ENCODE measurements at regions of chr1 and their contacts with region 1.

Region 1: DNA sequence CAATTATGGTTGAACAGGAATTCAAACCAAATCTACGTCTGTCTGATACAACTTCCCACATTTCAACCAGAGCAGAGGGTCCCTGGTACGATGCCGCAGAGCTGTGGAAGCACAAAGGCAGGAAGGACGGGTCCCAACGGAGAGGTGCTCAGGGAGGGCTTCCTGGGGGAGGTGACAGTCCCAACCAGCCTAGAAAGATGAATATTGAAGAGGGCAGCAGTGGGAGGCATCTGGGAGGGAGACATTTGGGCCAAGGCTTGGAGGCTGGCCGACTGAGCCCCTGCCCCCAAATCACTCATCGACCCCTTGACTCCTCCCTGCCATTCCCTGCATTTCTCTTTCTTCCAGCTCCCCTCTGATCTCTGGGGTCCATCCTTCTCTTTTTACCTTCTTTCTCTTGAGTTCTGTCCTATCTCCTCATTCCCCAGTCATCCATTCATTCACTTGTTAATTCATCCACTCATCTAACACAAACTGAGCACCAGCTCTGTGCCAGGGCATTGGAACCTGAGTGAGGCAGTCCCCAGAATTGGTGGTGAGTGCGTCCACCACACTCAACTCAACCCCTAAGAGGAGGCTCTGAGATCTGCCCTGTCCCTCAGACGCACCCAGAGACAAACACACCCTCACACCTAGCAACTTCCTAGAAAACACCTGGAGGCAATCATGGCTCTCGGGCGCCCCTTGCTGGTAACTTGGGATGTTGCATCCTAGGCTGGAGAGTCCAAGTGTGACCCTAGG is 13.2 kb upstream of the CELA3B start:
- DNase-seq: peak; percentile 70 to 86
- ATAC-seq: peak; percentile 79 to 93 (median 91)
- H3K4me3 ChIP-seq: no peak overlapping the region
- H3K4me3 Mint-ChIP-seq: no peak overlapping the region
- H3K27ac ChIP-seq: no peak overlapping the region
- H3K27ac Mint-ChIP-seq: no peak overlapping the region
- H3K4me1 ChIP-seq: no peaks in the 10 kb centered on the region
- H3K4me1 Mint-ChIP-seq: peaks cover 4 to 5% of the 10 kb centered on the region in 2 donors
- H3K27me3 ChIP-seq: no peaks in the 10 kb centered on the region
- H3K27me3 Mint-ChIP-seq: peaks cover 3 to 6% of the 10 kb centered on the region in 2 donors
- CTCF ChIP-seq: peak; percentile 88

Region 2: GRCh38 chr1:21508580-21509350 is 454.9 kb before region 1 on chr1:
- intact Hi-C with region 1: loop called (anchors 5 kb)
- DNase-seq: peak; percentile 52 to 71
- ATAC-seq: peak; percentile 87 to 94 (median 90)
- H3K4me3 ChIP-seq: no peak overlapping the region
- H3K4me3 Mint-ChIP-seq: peak overlapping the region; percentile 26
- H3K27ac ChIP-seq: no peak overlapping the region
- H3K27ac Mint-ChIP-seq: no peak overlapping the region
- H3K4me1 ChIP-seq: peaks cover 8% of the 10 kb centered on the region
- H3K4me1 Mint-ChIP-seq: peaks cover 6 to 7% of the 10 kb centered on the region in 2 donors
- H3K27me3 ChIP-seq: peaks cover 16% of the 10 kb centered on the region
- H3K27me3 Mint-ChIP-seq: peaks cover 45 to 60% of the 10 kb centered on the region in 2 donors
- CTCF ChIP-seq: peak; percentile 20

Region 3: GRCh38 chr1:21703318-21703963 is 260.2 kb before region 1 on chr1:
- intact Hi-C with region 1: loop called (anchors 1 kb)
- DNase-seq: peak in 1 of 2 donors; percentile 37
- ATAC-seq: peak in 1 of 3 donors; percentile 37
- H3K4me3 ChIP-seq: no peak overlapping the region
- H3K4me3 Mint-ChIP-seq: no peak overlapping the region
- H3K27ac ChIP-seq: no peak overlapping the region
- H3K27ac Mint-ChIP-seq: peak overlapping the region in 1 of 2 donors; percentile 21
- H3K4me1 ChIP-seq: no peaks in the 10 kb centered on the region
- H3K4me1 Mint-ChIP-seq: peaks cover 0 to 4% of the 10 kb centered on the region in 2 donors
- H3K27me3 ChIP-seq: no peaks in the 10 kb centered on the region
- H3K27me3 Mint-ChIP-seq: no peaks in the 10 kb centered on the region
- CTCF ChIP-seq: no peak

Region 4: GRCh38 chr1:21725748-21726392 is 237.8 kb before region 1 on chr1:
- intact Hi-C with region 1: no loop called
- DNase-seq: no peak
- ATAC-seq: no peak
- H3K4me3 ChIP-seq: no peak overlapping the region
- H3K4me3 Mint-ChIP-seq: no peak overlapping the region
- H3K27ac ChIP-seq: no peak overlapping the region
- H3K27ac Mint-ChIP-seq: peak overlapping the region in 1 of 2 donors; percentile 22
- H3K4me1 ChIP-seq: no peaks in the 10 kb centered on the region
- H3K4me1 Mint-ChIP-seq: peaks cover 5 to 11% of the 10 kb centered on the region in 2 donors
- H3K27me3 ChIP-seq: no peaks in the 10 kb centered on the region
- H3K27me3 Mint-ChIP-seq: no peaks in the 10 kb centered on the region
- CTCF ChIP-seq: no peak

Measured in natural killer cell (primary cell).